ENCODE measurements at regions of chrX and their contacts with region 1.

Region 1: GRCh38 chrX:153507484-153508178 is 9.8 kb upstream of the ATP2B3 start:
- DNase-seq: no peak
- H3K4me3 ChIP-seq: no peak overlapping the region
- H3K27ac ChIP-seq: no peak overlapping the region
- H3K4me1 ChIP-seq: peaks cover 0 to 19% (median 0%) of the 10 kb centered on the region in 3 donors
- H3K27me3 ChIP-seq: no peaks in the 10 kb centered on the region
- CTCF ChIP-seq: peak; percentile 77 to 87 (median 84)
- POLR2A ChIP-seq: no peak

Region 2: DNA sequence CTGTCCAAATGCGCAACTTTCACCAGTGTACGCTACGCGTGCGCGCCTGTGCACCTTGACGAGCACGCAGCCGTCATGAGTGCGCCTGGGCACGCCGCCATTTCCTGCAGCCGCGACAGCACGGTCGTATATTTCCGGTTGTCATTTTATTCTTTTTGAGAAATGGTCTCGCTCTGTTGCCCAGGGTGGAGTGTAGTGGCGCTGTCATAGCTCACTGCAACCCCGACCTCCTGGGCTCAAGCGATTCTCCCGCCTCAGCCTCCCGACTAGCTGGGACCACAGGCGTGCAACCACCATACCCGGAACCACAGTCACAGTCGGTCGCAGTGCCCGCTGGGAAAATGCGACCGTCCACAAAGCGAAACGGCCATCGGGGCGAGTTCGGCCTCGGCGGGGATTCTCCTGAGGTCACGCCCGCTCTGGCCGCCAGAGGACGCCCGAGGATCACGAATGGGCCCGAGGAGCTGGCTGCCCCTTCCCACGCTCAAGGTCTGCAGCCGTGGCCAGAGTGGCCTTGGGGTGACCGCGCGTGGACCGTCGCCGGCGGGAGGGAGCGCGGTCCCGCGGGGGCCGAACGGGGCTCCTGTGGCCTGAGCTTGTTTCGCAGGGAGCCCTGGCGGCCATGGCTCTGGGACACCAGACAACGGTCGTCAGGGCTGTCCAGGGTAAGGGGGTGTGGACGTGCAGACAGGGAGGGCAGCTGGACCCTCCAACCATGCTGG is 475.1 kb before region 1 on chrX:
- intact Hi-C with region 1: loop called (anchors 10 kb)
- DNase-seq: no peak
- H3K4me3 ChIP-seq: peak overlapping the region; percentile 20 to 64 (median 37)
- H3K27ac ChIP-seq: peak overlapping the region in 2 of 4 donors; percentile 7 to 25
- H3K4me1 ChIP-seq: peaks cover 0 to 8% (median 0%) of the 10 kb centered on the region in 3 donors
- H3K27me3 ChIP-seq: no peaks in the 10 kb centered on the region
- CTCF ChIP-seq: peak; percentile 51 to 88 (median 80)
- POLR2A ChIP-seq: no peak

Region 3: GRCh38 chrX:153423652-153424051 is 84.0 kb before region 1 on chrX:
- intact Hi-C with region 1: no loop called
- DNase-seq: no peak
- H3K4me3 ChIP-seq: no peak overlapping the region
- H3K27ac ChIP-seq: no peak overlapping the region
- H3K4me1 ChIP-seq: no peaks in the 10 kb centered on the region
- H3K27me3 ChIP-seq: peaks cover 0 to 12% (median 0%) of the 10 kb centered on the region in 4 donors
- CTCF ChIP-seq: no peak
- POLR2A ChIP-seq: no peak

Region 4: GRCh38 chrX:153470435-153471363 is 36.9 kb before region 1 on chrX and contains the start of gene HAUS7:
- intact Hi-C with region 1: loop called (anchors 5 kb)
- DNase-seq: peak; percentile 70
- H3K4me3 ChIP-seq: peak within 1 kb of the TSS; percentile 52 to 75 (median 60)
- H3K27ac ChIP-seq: peak within 1 kb of the TSS; percentile 60 to 87 (median 73)
- H3K4me1 ChIP-seq: peaks cover 10 to 53% (median 15%) of the 10 kb centered on the region in 3 donors
- H3K27me3 ChIP-seq: no peaks in the 10 kb centered on the region
- CTCF ChIP-seq: peak; percentile 50 to 68 (median 62)
- POLR2A ChIP-seq: no peak
- total RNA-seq, gene HAUS7: 8.8 to 21.0 (median 12.1) TPM

Region 5: DNA sequence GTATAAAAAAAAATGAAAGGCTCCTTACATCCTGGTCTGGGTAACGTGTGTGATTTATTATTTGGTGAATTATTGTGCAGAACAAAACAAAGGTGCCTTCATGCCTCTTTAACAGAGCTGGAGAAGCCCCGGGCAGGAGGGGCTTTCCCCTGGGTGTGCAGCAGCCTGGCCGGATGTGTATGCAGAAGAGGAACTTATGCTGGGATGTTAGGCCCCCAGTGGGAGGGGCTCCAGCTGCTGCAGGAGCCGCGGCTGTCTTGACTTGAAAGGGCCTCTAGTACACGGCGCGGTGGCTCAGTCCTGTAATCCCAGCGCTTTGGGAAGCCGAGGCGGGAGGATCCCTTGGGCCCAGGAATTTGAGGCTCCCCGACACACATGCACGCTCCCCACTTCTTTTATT is 75.3 kb after region 1 on chrX:
- intact Hi-C with region 1: no loop called
- DNase-seq: no peak
- H3K4me3 ChIP-seq: no peak overlapping the region
- H3K27ac ChIP-seq: no peak overlapping the region
- H3K4me1 ChIP-seq: peaks cover 0 to 12% (median 0%) of the 10 kb centered on the region in 3 donors
- H3K27me3 ChIP-seq: no peaks in the 10 kb centered on the region
- CTCF ChIP-seq: no peak
- POLR2A ChIP-seq: no peak